HEK293 (cell line): ENCODE measurements at regions of chr11 and their contacts with region 1.

Region 1: GRCh38 chr11:72446902-72447769 is 12.8 kb upstream of the CLPB start:
- H3K4me3 ChIP-seq: no peak overlapping the region
- H3K27ac ChIP-seq: no peak overlapping the region
- H3K4me1 ChIP-seq: no peaks in the 10 kb centered on the region
- CTCF ChIP-seq: peak; percentile 42; the same call in 1 of the 2 replicates

Region 2: GRCh38 chr11:72391638-72392423 is 55.3 kb before region 1 on chr11:
- CTCF ChIA-PET with region 1: interaction called, 10 read pairs
- POLR2A ChIA-PET with region 1: no interaction called
- H3K4me3 ChIP-seq: no peak overlapping the region
- H3K27ac ChIP-seq: no peak overlapping the region
- H3K4me1 ChIP-seq: no peaks in the 10 kb centered on the region
- CTCF ChIP-seq: no peak

Region 3: DNA sequence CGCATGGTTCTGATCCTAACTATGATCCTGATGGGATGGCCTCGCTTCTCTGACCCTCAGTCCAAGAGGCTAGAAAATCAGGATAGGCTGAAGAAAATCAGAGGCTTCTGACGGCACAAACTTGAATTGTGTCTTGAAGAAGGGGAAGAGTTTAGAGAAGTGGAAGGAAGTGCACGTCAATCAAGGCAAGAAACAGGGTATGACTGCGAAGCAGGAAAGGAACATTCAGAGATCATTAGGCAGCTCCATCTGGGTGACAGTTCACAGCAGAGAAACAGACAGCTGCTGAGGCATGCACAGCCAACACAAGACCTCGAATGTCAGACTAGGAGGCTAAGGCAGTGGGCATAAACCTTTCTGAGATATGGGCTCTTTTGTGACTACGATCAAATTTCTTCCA is 42.1 kb before region 1 on chr11:
- CTCF ChIA-PET with region 1: no interaction called
- POLR2A ChIA-PET with region 1: no interaction called
- H3K4me3 ChIP-seq: no peak overlapping the region
- H3K27ac ChIP-seq: no peak overlapping the region
- H3K4me1 ChIP-seq: no peaks in the 10 kb centered on the region
- CTCF ChIP-seq: no peak

Region 4: GRCh38 chr11:72460091-72460647 is 13.0 kb after region 1 on chr11:
- CTCF ChIA-PET with region 1: interaction called, 13 read pairs
- POLR2A ChIA-PET with region 1: no interaction called
- H3K4me3 ChIP-seq: no peak overlapping the region
- H3K27ac ChIP-seq: no peak overlapping the region
- H3K4me1 ChIP-seq: no peaks in the 10 kb centered on the region
- CTCF ChIP-seq: no peak

Region 5: DNA sequence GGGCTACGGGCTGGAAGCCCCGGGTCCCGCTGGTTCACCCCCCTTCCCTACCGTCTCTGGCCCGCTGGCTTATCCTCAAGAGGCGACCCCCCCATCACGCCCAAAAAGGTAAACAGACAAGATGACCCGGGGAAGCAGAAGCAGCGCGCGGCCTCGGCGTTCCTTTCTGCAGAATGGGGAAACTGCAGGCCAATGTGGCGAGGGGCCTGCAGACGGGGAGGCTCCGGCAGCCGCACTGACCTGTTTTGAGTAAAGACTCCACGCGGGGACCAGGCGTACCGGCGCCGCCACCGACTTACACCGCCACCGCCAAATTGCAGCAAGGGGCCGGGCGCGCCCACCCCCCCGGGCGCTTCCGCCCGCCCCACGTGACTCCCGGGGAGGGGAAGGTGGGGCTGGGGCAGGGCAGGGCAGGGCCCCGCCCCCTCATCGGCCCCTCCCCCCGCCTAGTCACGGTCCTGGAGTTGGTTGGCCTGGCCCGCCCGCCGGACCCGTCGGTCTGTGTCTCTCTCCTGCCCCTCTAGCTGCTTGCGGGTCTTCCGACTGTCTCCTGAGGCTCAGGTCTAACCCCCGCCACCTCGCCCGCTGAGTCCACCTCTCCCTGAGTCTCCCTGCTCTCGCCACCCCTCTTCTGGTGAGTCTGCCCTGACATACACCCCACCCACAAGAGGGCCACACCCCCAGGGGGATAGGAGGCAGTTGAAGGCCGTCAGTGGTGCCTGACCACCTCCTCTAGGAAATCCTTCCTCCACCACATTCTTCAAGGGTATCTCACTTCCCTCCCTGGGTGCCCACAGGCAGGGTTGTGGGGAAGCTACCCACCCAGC is 305.2 kb after region 1 on chr11 and contains the start of gene ARAP1:
- CTCF ChIA-PET with region 1: no interaction called
- POLR2A ChIA-PET with region 1: no interaction called
- H3K4me3 ChIP-seq: peak within 1 kb of the TSS; percentile 65
- H3K27ac ChIP-seq: peak within 1 kb of the TSS; percentile 27; the same call in 1 of the 2 replicates
- H3K4me1 ChIP-seq: no peaks in the 10 kb centered on the region
- CTCF ChIP-seq: no peak